Common myeloid progenitor, CD34-positive (primary cell): ENCODE measurements at regions of chr17 and their contacts with region 1.

Region 1: DNA sequence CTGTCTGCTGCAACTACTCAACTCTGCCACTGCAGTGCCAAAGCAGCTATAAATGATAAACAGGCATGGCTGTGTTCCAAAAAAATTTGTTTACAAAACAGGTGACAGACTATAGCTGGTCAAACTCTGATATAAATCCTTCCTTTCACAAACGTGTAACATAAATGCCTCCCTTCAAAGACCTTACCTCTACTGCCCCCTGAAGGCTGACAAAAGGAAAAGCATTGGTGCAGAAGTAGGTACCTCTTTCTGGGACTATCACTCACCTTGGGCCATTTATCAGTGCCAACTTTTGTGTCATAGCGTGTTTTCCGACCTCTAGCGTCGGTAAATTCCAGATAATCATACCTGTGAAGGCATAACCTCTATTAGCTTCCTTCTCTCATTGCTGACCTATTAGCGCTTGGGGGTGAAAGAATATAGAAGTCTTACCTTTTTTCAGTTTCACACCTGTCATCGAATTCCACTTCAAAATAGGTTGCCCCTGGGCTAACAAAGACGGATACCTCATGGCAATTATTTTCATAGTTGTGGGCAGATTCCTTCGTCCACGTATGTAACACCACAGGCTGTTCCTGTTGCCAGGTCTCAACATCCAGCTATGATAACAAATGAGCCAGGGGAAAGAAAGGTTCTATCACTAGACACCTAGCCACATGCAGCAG is 67.9 kb downstream of the ZZEF1 start:
- DNase-seq: peak; percentile 63 to 80 (median 74)
- H3K4me3 ChIP-seq: no peak overlapping the region
- H3K27ac ChIP-seq: no peak overlapping the region
- H3K4me1 ChIP-seq: no peaks in the 10 kb centered on the region
- H3K27me3 ChIP-seq: no peaks in the 10 kb centered on the region

Region 2: GRCh38 chr17:3845621-3846441 is 229.1 kb before region 1 on chr17 and contains the start of gene NCBP3:
- CTCF ChIA-PET with region 1: interaction called, 37 read pairs
- POLR2A ChIA-PET with region 1: no interaction called
- DNase-seq: peak; percentile 94 to 97 (median 97)
- H3K4me3 ChIP-seq: peak within 1 kb of the TSS; percentile 79 to 92 (median 88)
- H3K27ac ChIP-seq: peak within 1 kb of the TSS; percentile 82 to 91
- H3K4me1 ChIP-seq: peaks cover 3 to 22% (median 19%) of the 10 kb centered on the region in 4 experiments
- H3K27me3 ChIP-seq: no peaks in the 10 kb centered on the region

Region 3: GRCh38 chr17:4136373-4136772 is 61.4 kb after region 1 on chr17:
- CTCF ChIA-PET with region 1: no interaction called
- POLR2A ChIA-PET with region 1: no interaction called
- DNase-seq: no peak
- H3K4me3 ChIP-seq: no peak overlapping the region
- H3K27ac ChIP-seq: no peak overlapping the region
- H3K4me1 ChIP-seq: peaks cover 0 to 7% (median 3%) of the 10 kb centered on the region in 4 experiments
- H3K27me3 ChIP-seq: no peaks in the 10 kb centered on the region